Mammary epithelial cell (primary cell): ENCODE measurements at regions of chr19 and their contacts with region 1.

Region 1: GRCh38 chr19:33280351-33280921 is 21.9 kb downstream of the CEBPA start:
- DNase-seq: no peak
- H3K4me3 ChIP-seq: no peak overlapping the region
- H3K27ac ChIP-seq: no peak overlapping the region
- H3K4me1 ChIP-seq: no peaks in the 10 kb centered on the region
- H3K27me3 ChIP-seq: no peaks in the 10 kb centered on the region
- CTCF ChIP-seq: no peak

Region 2: GRCh38 chr19:32294871-32295438 is 985.5 kb before region 1 on chr19:
- CTCF ChIA-PET with region 1: interaction called, 10 read pairs
- dilution Hi-C with region 1: no loop called
- in situ Hi-C with region 1: no loop called
- intact Hi-C with region 1: no loop called
- DNase-seq: no peak
- H3K4me3 ChIP-seq: no peak overlapping the region
- H3K27ac ChIP-seq: no peak overlapping the region
- H3K4me1 ChIP-seq: no peaks in the 10 kb centered on the region
- H3K27me3 ChIP-seq: no peaks in the 10 kb centered on the region
- CTCF ChIP-seq: no peak